ENCODE measurements at regions of chr14 and their contacts with region 1.

Region 1: GRCh38 chr14:96100161-96101029 is 61.2 kb downstream of the C14orf132 start:
- DNase-seq: peak in 4 of 5 donors; percentile 59 to 72 (median 64)
- ATAC-seq: peak in 3 of 4 donors; percentile 52 to 66 (median 55)
- H3K4me3 ChIP-seq: no peak overlapping the region
- H3K27ac ChIP-seq: no peak overlapping the region
- H3K4me1 ChIP-seq: peaks cover 0 to 5% (median 0%) of the 10 kb centered on the region in 12 donors
- H3K27me3 ChIP-seq: peaks cover 0 to 29% (median 0%) of the 10 kb centered on the region in 9 donors
- CTCF ChIP-seq: peak; percentile 40 to 86 (median 76)
- POLR2A ChIP-seq: no peak

Region 2: DNA sequence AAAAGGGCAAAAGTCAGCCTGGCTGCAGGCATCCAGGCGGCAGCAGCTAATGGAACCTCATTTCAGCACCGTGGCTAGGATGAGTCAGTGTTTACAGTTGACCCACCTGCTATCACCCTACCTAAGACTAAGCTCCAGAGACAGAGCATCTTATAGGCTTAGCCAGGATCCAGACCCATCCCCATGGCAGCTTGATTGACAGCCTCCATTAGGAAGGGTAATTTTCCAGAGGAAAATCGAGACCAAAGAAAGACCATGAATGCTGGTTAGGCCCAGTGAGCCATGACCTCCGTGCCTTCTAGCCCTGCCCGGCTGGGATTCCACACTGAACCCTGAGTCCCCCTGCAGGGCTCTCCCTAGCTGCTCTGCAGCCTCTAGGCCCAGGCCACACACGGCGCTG is 185.1 kb before region 1 on chr14:
- intact Hi-C with region 1: no loop called
- DNase-seq: no peak
- ATAC-seq: no peak
- H3K4me3 ChIP-seq: no peak overlapping the region
- H3K27ac ChIP-seq: no peak overlapping the region
- H3K4me1 ChIP-seq: no peaks in the 10 kb centered on the region
- H3K27me3 ChIP-seq: peaks cover 0 to 42% (median 4%) of the 10 kb centered on the region in 9 donors
- CTCF ChIP-seq: no peak
- POLR2A ChIP-seq: no peak

Region 3: GRCh38 chr14:95993768-95994592 is 106.4 kb before region 1 on chr14:
- intact Hi-C with region 1: loop called in 4 of 10 experiments (anchors 2 to 10 kb)
- DNase-seq: peak in 1 of 5 donors; percentile 8
- ATAC-seq: no peak
- H3K4me3 ChIP-seq: no peak overlapping the region
- H3K27ac ChIP-seq: no peak overlapping the region
- H3K4me1 ChIP-seq: no peaks in the 10 kb centered on the region
- H3K27me3 ChIP-seq: peaks cover 0 to 49% (median 10%) of the 10 kb centered on the region in 9 donors
- CTCF ChIP-seq: peak; percentile 65 to 84 (median 78)
- POLR2A ChIP-seq: no peak

Region 4: DNA sequence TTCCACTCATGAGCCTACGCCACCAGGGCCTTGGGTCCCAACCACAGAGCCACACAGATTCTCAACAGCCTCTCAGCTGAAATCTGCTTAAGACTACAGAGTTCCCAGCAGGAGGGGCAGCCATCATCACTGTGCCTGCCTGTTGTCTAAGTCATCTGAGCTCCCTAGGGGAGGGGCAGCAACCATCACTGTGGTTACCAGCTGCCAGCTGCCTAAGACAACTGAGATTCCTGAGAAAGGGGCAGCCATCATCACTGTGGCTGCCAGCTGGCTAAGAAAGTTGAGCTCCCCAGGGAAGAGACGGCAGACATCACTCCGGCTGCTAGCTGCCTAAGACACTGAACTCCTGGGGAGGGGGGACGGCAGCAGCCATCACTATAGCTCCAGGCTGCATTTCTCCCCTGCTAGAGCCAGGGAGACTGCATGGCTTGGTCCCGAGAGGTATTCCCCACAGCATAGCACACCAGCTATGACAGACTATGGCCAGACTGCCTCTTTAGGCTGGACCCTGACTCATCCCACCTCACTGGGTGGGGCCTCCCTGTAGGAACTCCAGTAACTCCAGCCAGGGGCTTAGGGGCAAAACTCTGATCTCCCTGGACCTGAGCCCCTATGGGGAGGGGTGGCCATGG is 98.4 kb before region 1 on chr14:
- intact Hi-C with region 1: loop called in 6 of 10 experiments (anchors 2 to 10 kb)
- DNase-seq: no peak
- ATAC-seq: no peak
- H3K4me3 ChIP-seq: no peak overlapping the region
- H3K27ac ChIP-seq: no peak overlapping the region
- H3K4me1 ChIP-seq: no peaks in the 10 kb centered on the region
- H3K27me3 ChIP-seq: peaks cover 0 to 50% (median 22%) of the 10 kb centered on the region in 9 donors
- CTCF ChIP-seq: no peak
- POLR2A ChIP-seq: no peak

Region 5: DNA sequence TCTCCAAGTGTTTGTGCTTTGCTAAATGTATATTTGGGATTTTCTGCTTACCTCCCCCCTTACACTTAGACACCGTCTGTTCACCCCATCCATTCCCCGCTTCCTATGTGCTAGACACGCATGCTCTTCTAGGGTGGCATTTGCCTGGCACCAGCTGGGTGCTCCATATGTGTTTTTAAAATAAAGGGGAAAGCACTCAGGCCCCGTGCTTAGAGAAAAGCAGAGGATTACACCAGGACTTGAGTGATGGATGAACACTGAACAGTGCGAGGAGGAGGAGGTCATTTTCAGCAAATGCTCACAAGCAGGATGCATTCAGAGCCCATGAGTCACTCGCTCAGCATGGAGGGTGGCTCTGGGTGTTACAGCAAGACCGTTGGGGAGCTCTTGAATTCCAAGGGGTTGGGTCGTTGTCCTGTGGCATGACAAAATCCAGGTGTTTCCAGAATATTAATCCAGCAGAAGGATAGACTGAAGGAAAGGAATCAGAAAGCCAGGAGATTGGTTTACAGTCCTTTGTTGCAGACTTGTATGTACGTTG is 152.7 kb after region 1 on chr14:
- intact Hi-C with region 1: no loop called
- DNase-seq: no peak
- ATAC-seq: no peak
- H3K4me3 ChIP-seq: no peak overlapping the region
- H3K27ac ChIP-seq: no peak overlapping the region
- H3K4me1 ChIP-seq: peaks cover 0 to 6% (median 0%) of the 10 kb centered on the region in 12 donors
- H3K27me3 ChIP-seq: peaks cover 0 to 32% (median 0%) of the 10 kb centered on the region in 9 donors
- CTCF ChIP-seq: no peak
- POLR2A ChIP-seq: no peak

Region 6: GRCh38 chr14:96275177-96276112 is 175.1 kb after region 1 on chr14:
- intact Hi-C with region 1: loop called (anchors 1 to 2 kb)
- DNase-seq: peak; percentile 51 to 78 (median 58)
- ATAC-seq: peak in 3 of 4 donors; percentile 58 to 69 (median 64)
- H3K4me3 ChIP-seq: no peak overlapping the region
- H3K27ac ChIP-seq: no peak overlapping the region
- H3K4me1 ChIP-seq: peaks cover 0 to 8% (median 0%) of the 10 kb centered on the region in 12 donors
- H3K27me3 ChIP-seq: no peaks in the 10 kb centered on the region
- CTCF ChIP-seq: peak; percentile 83 to 96 (median 90)
- POLR2A ChIP-seq: no peak

Region 7: GRCh38 chr14:96424109-96424989 is 324.0 kb after region 1 on chr14:
- intact Hi-C with region 1: loop called in 8 of 10 experiments (anchors 1 to 10 kb)
- DNase-seq: peak in 3 of 5 donors; percentile 13 to 68 (median 35)
- ATAC-seq: peak; percentile 51 to 93 (median 79)
- H3K4me3 ChIP-seq: peak overlapping the region; percentile 6 to 56 (median 44)
- H3K27ac ChIP-seq: no peak overlapping the region
- H3K4me1 ChIP-seq: peaks cover 0 to 14% (median 2%) of the 10 kb centered on the region in 12 donors
- H3K27me3 ChIP-seq: no peaks in the 10 kb centered on the region
- CTCF ChIP-seq: peak; percentile 68 to 85 (median 79)
- POLR2A ChIP-seq: no peak

Region 8: DNA sequence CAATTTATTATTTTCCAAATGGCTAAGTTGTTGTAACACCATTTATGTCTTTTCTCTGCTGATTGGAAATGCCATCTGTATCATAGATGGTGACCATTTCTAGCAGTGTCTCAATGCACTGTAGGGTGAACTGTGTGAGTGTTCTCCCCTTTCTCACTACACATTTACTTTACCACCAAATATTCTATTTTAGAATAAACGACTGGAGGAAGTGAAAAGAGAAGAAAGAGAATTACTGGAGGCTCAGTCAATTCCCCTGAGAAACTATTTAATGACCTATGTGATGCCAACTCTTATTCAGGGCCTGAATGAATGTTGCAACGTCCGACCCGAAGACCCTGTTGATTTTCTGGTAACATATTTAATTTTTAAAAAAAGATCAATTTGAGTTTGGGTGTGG is 386.3 kb after region 1 on chr14:
- intact Hi-C with region 1: no loop called
- DNase-seq: no peak
- ATAC-seq: no peak
- H3K4me3 ChIP-seq: no peak overlapping the region
- H3K27ac ChIP-seq: no peak overlapping the region
- H3K4me1 ChIP-seq: no peaks in the 10 kb centered on the region
- H3K27me3 ChIP-seq: peaks cover 0 to 6% (median 0%) of the 10 kb centered on the region in 9 donors
- CTCF ChIP-seq: no peak
- POLR2A ChIP-seq: no peak

Measured in heart left ventricle (tissue), 16 donors.